MCF 10A (cell line): ENCODE measurements at regions of chr16 and their contacts with region 1.

Region 1: GRCh38 chr16:641302-642188 is at the start of gene MCRIP2:
- DNase-seq: peak; percentile 80
- H3K4me3 Mint-ChIP-seq: peak within 1 kb of the TSS; percentile 77
- H3K27ac Mint-ChIP-seq: peak within 1 kb of the TSS; percentile 59
- H3K4me1 Mint-ChIP-seq: peaks cover 11% of the 10 kb centered on the region
- H3K27me3 Mint-ChIP-seq: no peaks in the 10 kb centered on the region
- CTCF ChIP-seq: no peak
- total RNA-seq, gene MCRIP2: 43.6 and 44.6 TPM in 2 replicates

Region 2: GRCh38 chr16:621528-622105 is 19.9 kb before region 1 on chr16:
- CTCF ChIA-PET with region 1: interaction called, 4 read pairs
- POLR2A ChIA-PET with region 1: interaction called, 43 read pairs
- intact Hi-C with region 1: no loop called
- DNase-seq: peak; percentile 42
- H3K4me3 Mint-ChIP-seq: peak overlapping the region; percentile 64
- H3K27ac Mint-ChIP-seq: peak overlapping the region; percentile 85
- H3K4me1 Mint-ChIP-seq: peaks cover 11% of the 10 kb centered on the region
- H3K27me3 Mint-ChIP-seq: no peaks in the 10 kb centered on the region
- CTCF ChIP-seq: no peak